Ascending aorta (tissue), 2 donors: ENCODE measurements at regions of chr10 and their contacts with region 1.

Region 1: DNA sequence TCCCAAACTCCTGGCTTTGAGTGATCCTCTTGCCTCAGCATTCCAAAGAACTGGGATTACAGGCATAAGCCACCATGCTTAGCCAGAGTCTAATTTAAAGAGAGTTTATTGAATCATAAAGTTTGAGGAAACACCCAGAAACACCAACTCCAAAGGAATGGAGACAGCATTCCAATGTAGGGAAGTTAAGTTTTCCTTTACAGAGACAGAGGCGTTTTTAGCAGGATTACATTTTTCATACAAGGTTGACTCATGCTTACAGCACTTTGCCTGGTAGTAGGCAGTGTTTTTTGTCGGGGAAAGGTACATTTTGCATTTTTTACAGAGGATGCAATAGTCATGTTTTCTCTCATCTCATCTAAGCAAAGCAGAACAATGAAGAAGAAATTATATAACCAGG is 18.9 kb upstream of the OPN4 start:
- DNase-seq: peak in 1 of 2 donors; percentile 25
- H3K4me3 ChIP-seq: no peak overlapping the region
- H3K27ac ChIP-seq: peak overlapping the region; percentile 9 to 60
- H3K4me1 ChIP-seq: peaks cover 0 to 8% of the 10 kb centered on the region in 2 donors
- H3K27me3 ChIP-seq: no peaks in the 10 kb centered on the region
- CTCF ChIP-seq: no peak

Region 2: GRCh38 chr10:86411281-86411841 is 224.0 kb before region 1 on chr10:
- intact Hi-C with region 1: loop called (anchors 5 kb)
- DNase-seq: no peak
- H3K4me3 ChIP-seq: peak overlapping the region in 1 of 2 donors; percentile 2
- H3K27ac ChIP-seq: peak overlapping the region; percentile 79
- H3K4me1 ChIP-seq: peaks cover 7 to 27% of the 10 kb centered on the region in 2 donors
- H3K27me3 ChIP-seq: no peaks in the 10 kb centered on the region
- CTCF ChIP-seq: no peak